ENCODE measurements at regions of chr2 and their contacts with region 1.

Region 1: DNA sequence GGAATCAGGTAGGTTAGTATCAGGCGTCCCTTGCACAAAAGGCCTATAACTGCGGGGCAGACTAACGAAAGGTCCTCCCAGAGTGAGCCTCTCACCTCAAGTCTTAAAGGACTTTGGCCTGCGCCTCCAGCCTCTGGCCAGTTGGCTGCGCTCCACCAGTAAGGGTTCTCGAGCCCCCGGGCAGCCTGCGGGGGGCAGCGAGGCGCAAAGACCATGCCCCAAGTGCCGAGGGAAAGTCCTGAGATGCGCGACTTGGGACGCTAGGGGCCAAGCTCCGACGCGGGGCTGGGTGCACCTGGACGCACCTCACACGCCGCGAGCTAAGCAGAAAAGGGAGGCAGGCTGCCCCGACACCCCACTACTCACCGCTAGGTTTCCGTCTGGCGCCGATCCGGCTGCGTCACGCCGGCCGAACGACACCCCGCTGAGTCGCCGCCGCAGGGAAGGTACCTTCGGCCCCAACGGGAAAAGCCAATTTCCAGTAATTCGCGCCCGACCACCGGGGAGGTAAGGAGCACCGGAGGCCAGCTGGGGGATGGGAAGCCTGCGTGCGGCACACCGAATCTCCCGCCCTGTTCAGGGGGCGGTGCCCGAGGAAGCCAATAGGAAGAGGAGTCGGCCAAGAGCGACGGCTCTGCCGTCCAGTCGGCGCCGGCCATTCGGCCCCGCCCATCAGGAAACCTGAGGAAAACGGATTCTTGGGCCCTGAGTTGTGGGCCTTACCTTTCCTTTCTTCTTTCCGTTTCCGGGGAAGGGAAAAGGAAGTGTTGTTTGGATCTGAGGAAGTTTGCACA is at the start of gene ORC2:
- DNase-seq: peak; percentile 88 to 99 (median 92)

Region 2: DNA sequence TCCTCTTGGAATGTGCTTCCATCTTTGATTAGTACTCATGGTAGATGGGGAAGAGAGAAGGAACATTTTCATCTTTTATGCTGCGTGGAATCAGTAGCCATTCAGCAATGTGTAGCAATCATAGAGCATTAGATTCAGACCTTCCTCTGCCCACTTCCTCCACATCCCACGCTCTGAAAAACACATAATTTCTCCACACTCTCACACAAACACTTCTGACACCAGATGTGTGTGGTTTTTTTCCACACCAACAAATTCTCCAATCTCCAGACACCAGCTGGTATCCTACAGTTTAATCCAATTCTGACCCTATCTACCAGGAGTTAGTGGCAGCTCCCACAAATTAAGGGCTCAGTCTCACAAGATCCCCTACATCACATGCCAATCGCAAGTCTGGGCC is 274.2 kb before region 1 on chr2:
- intact Hi-C with region 1: no loop called
- DNase-seq: no peak

Region 3: DNA sequence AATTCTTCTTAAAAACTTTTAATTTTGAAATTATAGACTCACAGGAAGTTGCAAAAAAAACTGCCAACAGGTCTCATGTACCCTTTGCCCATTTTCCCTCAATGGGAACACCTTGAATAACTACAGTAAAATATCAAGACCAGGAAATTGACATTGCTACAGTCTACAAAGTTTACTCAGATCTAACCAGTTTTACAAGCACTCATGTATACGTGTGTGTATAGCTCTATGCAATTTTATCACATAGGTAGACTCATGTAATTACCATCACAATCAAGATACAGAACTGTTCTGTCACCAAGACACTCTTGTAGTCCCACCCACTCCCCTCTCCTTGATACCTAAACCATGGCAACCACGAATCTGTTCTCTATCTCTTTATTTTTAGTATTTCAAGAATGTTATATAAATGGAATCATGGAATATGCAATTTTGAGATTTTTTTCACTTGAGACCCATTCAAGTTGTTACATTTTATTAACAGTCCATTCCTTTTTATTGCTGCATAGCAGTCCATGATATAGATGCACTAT is 101.5 kb after region 1 on chr2:
- intact Hi-C with region 1: loop called (anchors 5 kb)
- DNase-seq: no peak

Region 4: DNA sequence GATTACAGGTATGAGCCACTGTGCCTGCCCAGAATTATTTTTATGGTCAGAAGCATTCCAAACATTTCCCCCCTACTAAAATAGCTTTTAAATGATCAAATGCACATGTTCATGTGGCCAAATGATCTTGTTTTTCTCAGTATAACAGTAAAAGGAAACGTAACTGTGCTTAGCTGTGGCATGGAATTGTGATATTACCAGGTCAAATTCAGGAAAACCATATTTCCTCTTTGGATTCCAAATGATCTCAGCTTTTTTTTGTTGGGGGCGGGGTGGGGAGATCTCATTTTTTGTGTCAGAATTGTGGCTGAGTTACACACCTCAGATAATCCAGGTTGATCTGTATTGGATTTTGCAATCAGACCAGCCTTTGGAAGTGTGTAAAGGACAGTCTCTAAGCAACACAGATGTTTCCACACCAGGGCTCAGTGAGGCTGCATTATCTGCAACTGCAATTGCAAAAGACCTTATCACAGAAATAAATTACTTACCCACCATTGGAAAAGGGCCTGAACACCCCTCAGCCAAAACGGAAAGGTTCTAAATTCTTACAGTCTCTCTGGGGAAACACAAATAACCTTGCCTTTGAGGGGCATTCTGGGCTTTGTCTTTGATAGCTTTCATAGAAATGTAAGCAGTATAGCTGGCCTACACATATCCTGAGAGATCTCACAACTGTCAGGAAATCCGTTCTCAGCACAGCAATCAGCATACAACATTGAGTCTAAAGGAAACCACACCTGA is 228.0 kb after region 1 on chr2:
- intact Hi-C with region 1: no loop called
- DNase-seq: no peak